Uterus (tissue), 4 donors: ENCODE measurements at regions of chr22 and their contacts with region 1.

Region 1: DNA sequence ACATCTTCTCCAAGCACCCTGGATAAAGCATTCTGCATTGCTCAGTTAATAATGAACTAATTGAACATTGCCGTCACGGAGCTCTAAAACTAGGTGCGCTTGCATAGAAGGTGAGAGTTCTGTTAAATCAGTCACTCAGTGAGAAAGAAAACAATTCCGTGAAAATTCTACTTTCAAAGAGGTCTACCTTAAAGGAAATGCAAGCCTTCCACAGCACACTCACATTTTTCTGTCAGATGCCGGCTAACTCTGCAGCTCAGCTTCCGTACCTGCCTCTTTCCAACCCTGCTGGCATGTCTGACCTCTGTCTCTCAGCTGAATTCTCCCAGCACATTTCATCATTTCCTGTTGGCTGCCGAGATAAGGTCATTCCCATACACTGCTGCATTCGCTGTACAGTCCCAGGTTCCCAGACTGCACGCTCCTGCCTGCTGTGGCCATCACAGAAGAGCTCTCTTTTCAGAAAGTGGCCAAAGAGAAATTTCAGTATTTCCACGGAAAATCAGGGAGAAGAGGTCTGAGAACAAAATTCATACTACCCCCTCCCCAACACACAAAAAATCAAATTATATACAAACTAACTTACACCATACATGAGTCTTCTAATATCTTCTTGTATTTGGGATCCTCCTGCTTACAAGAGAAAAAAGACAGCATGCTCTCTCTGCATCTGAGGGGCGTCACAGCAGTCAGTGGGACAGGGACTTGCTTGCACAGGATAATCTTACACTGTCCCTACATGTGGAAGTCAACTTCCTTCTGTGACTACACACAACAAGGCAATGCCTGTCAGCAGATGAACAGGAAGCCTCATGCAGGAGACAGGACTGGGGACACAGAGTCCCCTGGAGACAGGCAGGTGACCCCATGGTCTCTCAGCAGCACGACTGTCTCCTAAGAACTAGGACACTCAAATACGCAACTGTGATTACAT is 55.1 kb downstream of the PACSIN2 start:
- DNase-seq: peak in 1 of 2 donors; percentile 62
- H3K4me3 ChIP-seq: peak overlapping the region in 1 of 2 donors; percentile 2
- H3K27ac ChIP-seq: peak overlapping the region; percentile 31 to 59
- H3K4me1 ChIP-seq: peaks cover 0 to 8% of the 10 kb centered on the region in 2 donors
- H3K27me3 ChIP-seq: no peaks in the 10 kb centered on the region
- CTCF ChIP-seq: no peak
- POLR2A ChIP-seq: no peak

Region 2: DNA sequence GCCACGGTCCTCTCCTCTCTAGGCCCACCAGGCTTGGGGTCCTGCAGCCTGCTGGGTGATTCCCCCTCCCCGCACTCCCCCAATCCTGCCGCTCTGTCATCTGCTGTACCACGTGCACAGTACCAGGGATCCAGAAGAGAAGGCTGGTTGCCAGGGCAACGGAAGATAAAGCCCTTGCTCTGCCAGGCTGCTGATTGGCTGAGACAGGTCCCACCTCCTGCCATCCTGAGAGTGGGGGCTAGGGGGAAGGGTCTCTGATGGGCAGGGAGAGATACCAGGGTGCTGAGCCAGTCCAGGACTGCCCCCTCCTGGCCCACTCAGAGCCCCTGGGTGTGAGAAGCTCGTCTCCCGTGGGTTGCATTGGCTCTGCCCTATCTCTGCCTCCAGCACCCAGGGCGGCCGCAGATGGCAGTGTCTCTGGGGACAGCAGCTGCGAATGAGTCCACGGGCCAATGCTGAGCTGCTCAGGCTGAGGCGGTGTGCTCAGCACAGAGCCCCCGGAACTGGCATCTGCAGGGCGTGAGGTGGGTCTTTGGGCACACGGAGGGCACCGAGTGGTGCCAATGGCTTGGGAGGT is 1007.9 kb before region 1 on chr22 and contains the start of gene SMIM45:
- intact Hi-C with region 1: loop called (anchors 5 kb)
- DNase-seq: no peak
- H3K4me3 ChIP-seq: no peak within 1 kb of the TSS
- H3K27ac ChIP-seq: no peak within 1 kb of the TSS
- H3K4me1 ChIP-seq: no peaks in the 10 kb centered on the region
- H3K27me3 ChIP-seq: no peaks in the 10 kb centered on the region
- CTCF ChIP-seq: no peak
- POLR2A ChIP-seq: no peak

Region 3: GRCh38 chr22:42331014-42331413 is 628.8 kb before region 1 on chr22:
- intact Hi-C with region 1: no loop called
- DNase-seq: no peak
- H3K4me3 ChIP-seq: no peak overlapping the region
- H3K27ac ChIP-seq: no peak overlapping the region
- H3K4me1 ChIP-seq: no peaks in the 10 kb centered on the region
- H3K27me3 ChIP-seq: no peaks in the 10 kb centered on the region
- CTCF ChIP-seq: no peak
- POLR2A ChIP-seq: no peak